HEK293 (cell line): ENCODE measurements at regions of chr16 and their contacts with region 1.

Region 1: DNA sequence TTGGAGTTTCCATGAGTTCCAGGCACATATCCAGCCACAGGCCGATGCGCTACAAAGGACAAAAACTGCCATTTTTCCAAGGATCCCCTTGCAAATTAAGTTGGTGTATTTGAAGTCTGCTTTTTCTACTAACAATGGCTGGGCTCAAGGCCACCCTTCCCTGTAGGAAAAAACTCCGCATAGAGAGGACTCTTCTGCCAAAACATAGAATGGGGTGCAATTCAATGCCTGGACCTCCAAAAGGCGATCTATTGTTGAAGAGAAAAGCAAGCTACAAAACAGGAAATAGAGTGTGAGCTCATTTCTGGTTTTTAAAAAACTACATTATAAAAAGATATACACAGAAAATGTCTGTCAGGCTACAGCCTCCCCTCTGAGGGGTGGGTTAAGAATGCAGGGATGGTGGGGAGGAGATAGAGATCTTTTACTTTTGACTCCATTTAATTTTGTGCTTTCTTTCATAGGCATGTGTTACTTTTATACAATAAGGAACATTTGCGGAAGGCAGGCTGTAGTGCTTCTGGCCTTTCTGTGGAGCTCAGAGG is 22.9 kb upstream of the PRSS54 start:
- H3K4me3 ChIP-seq: no peak overlapping the region
- H3K27ac ChIP-seq: no peak overlapping the region
- H3K4me1 ChIP-seq: no peaks in the 10 kb centered on the region
- CTCF ChIP-seq: no peak

Region 2: DNA sequence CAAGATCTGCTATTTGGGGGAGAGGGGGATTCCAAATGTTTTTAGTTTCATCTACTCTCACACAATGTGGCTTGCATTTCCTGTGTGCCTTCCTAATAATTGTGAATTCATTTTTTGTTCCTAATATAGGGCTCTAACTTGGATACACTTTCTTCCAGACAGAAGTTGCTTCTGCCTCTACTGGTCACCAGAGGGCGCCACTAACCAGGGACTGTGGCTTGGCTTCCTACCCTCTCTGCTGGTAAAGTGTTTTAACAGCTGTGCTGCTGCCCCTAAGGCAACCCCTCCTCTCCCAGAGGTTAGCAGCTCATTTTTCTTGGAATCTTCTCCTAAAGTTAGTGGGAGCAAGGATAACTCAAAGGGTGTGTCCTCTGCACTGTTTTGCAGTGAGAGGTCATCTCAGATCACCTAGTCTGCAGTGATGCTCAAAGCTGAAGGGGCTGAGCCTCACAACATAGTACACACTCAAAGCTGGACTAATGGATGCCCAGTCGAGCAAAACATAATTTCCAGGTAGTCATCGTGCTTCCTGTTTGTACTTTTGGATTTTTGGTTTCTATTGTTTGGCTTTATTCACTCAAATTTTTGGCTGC is 17.8 kb before region 1 on chr16:
- CTCF ChIA-PET with region 1: interaction called, 22 read pairs
- POLR2A ChIA-PET with region 1: no interaction called
- H3K4me3 ChIP-seq: no peak overlapping the region
- H3K27ac ChIP-seq: no peak overlapping the region
- H3K4me1 ChIP-seq: no peaks in the 10 kb centered on the region
- CTCF ChIP-seq: no peak

Region 3: GRCh38 chr16:58366247-58367031 is 48.8 kb after region 1 on chr16:
- CTCF ChIA-PET with region 1: no interaction called
- POLR2A ChIA-PET with region 1: no interaction called
- H3K4me3 ChIP-seq: no peak overlapping the region
- H3K27ac ChIP-seq: no peak overlapping the region
- H3K4me1 ChIP-seq: no peaks in the 10 kb centered on the region
- CTCF ChIP-seq: no peak

Region 4: GRCh38 chr16:58384113-58385055 is 66.7 kb after region 1 on chr16:
- CTCF ChIA-PET with region 1: no interaction called
- POLR2A ChIA-PET with region 1: no interaction called
- H3K4me3 ChIP-seq: no peak overlapping the region
- H3K27ac ChIP-seq: no peak overlapping the region
- H3K4me1 ChIP-seq: peaks cover 1% of the 10 kb centered on the region; the same call in 1 of the 2 replicates
- CTCF ChIP-seq: no peak